ENCODE measurements at regions of chr14 and their contacts with region 1.

Region 1: DNA sequence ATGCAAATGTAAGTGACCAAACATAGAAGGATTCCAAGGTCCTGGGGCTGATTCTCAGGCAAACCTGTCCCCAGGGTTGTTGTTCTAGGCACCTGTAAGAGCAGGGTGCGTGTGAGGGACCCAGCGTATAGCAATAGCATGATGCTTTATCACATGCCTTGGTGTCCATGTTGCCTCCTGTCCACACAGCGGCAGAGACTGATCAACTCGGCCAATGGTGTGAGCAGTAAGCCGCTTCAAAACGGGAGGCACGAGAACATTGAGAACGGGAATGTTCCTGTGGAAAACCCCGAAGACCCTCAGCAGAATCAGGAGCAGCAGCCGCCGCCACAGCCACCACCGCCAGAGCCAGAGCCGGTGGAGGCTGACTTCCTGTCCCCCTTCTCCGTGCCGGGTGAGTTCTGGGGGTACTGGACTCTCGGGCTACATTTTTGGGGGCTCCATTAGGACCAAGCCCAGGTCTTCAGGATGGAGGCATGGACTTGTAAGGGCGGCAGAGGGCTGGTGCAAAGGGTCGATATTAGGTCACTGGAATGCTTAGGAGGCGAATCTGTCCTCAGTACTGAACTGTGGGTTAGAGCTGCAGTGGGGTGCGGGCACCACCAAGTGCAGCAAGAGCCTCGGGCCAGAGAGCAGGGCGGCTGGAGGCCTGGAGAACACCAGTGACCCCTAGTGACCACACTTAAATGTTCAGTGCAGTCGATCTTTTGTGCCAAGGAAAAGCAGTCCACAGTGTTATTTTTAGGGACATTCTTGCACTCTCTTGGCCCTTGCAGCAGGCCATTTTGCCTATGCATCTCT is 57.2 kb upstream of the RIN3 start:
- DNase-seq: peak; percentile 88
- ATAC-seq: peak; percentile 79

Region 2: DNA sequence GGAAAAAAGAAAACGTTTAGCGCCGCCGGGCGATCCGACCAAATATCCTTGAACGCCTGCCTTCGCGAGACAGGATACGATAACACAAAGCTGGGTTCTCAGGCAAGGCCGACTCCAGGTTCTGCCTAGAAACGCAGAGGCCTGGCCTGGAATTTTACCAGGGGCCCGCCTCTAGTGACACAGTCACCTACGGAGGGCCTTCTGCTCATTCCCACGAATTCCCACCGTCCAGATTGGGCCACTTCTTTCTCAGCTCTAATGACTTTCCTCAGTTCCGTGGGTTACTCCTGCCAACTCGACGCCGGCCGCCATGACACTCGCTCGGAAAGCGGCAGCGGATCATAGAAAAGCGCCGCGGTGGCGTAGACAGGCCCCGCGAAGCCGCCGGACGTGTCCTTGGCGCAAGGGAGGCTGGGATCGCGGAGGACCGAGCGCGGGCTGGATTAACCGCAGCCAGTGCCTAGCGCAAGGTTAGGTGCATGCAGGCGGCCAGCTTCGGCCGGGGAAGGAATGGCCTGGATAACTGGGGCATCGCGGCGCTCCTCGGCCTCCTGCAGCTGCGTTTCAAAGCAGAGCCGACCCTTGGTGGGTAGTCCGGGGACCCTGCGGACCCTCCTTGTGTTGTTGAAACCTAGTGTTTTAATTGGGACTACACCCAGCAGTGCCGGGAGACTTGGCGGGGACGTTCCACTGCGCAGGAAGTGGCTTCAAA is 416.5 kb before region 1 on chr14 and contains the start of gene TRIP11:
- intact Hi-C with region 1: loop called (anchors 10 kb)
- DNase-seq: peak; percentile 98
- ATAC-seq: peak; percentile 100
- total RNA-seq, gene TRIP11: 51.2 TPM

Region 3: GRCh38 chr14:92134456-92134855 is 322.0 kb before region 1 on chr14:
- intact Hi-C with region 1: loop called (anchors 5 kb)
- DNase-seq: no peak
- ATAC-seq: no peak

Region 4: DNA sequence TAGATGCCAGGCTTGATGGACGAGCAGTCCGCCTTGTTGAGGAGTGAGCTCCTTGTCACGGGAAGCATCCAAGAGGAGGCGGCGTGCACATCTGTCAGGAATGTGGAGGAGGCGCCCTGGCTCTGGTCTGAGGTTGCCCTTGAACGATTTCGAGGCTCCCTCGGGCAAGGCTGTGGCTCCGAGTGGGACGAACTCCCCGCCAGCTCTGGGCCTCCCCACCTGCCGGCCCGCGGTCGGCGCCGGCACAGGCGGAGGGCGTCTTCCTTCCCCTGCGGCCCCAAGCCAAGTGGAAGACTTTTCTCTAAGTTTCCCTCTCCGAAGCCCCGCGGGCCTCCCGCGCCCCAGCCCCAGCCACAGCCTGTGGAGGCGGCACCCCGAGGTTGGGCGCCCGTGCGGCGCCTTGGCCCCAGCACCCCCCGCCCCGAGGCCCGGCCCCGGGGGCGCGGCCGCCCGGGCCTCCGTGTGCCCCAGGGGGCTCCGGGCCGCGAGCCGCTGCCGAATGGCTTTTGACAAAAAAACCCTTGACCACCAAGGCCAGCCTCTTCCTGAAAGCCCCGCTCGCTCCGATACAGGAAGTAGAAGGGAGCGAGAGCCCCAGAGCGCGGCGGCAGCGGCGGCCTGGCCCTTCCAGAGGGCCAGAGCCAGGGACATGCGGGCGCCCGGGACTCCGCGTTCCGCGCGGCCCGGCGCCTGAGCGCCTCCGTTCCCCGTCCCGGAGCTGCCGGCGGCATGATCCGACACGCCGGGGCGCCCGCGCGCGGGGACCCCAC is 57.0 kb after region 1 on chr14 and contains the start of gene RIN3:
- intact Hi-C with region 1: loop called (anchors 5 kb)
- DNase-seq: peak; percentile 88
- ATAC-seq: peak; percentile 70
- total RNA-seq, gene RIN3: 13.0 TPM

Region 5: GRCh38 chr14:92549842-92550230 is 93.4 kb after region 1 on chr14:
- intact Hi-C with region 1: loop called (anchors 2 kb)
- DNase-seq: no peak
- ATAC-seq: peak; percentile 78

Region 6: DNA sequence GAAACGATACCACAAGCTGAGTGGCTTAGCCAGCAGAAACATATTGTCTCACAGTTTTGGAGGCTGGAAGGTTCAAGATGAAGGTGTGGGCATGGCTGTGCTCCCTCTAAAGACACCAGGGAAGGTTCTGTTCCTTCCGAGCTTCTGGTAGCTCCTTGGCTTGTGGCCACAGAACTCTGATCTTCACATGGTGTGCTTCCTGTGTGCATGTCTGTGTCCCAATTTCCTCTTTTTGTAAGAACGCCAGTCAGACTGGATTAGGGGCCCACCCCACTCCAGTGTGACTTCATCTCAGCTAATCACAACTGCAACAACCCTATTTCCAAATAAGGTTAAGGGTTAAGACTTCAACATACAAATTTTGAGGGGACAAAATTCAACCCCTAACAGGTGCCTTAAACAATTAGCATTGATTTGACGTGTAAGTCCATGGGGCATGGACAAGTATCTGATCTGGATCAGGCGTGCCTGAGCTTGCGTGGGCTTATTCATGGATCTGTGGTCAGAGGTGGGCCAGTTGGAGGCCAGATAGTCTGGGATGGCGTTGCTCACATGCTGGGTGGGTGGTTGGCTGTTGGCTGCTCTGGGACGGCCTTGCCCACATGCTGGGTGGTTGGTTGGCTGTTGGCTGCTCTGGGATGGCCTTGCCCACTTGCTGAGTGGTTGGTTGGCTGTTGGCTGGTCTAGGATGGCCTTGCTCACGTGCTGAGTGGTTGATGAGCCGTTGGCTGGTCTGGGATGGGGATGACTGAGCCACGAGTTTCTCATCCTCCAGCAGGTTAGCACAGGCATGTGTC is 203.5 kb after region 1 on chr14:
- intact Hi-C with region 1: loop called (anchors 5 kb)
- DNase-seq: no peak
- ATAC-seq: peak; percentile 59

Region 7: DNA sequence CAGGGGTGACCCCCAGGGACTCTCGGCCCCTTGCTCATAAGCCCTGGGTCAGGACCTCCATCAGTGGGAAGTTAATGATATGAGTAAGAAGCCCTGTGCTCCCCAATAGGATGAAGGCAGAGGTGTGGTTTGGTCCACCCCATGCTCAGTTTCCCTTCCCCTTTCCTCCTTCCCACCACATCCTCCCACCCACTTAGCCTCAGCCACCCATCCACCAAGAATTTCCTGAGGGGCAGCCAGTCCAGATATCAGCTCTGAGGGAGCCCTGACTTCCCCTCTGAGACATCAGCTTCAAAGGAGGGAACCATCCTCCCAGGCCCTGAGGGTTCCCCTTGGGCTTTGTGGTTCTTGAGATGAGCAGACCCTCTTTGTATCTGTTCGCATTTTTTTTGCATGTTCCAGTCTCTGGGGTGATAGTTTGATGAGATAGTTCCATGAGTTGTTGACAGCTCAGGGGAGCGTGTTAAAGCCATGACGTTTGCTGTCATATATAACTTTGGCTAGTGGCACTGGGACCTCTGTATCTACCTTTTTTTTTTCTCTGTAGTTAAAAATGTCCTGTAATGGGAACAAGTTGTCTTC is 220.8 kb after region 1 on chr14:
- intact Hi-C with region 1: loop called (anchors 5 kb)
- DNase-seq: no peak
- ATAC-seq: peak; percentile 45

Measured in Right ventricle myocardium inferior (tissue), 1 donor.